Common myeloid progenitor, CD34-positive (primary cell): ENCODE measurements at regions of chr7 and their contacts with region 1.

Region 1: GRCh38 chr7:35801392-35802101 is 690 bp downstream of the SEPTIN7 start:
- DNase-seq: peak; percentile 88 to 97 (median 93)
- H3K4me3 ChIP-seq: peak overlapping the region; percentile 75 to 95 (median 91)
- H3K27ac ChIP-seq: peak overlapping the region; percentile 98 to 99
- H3K4me1 ChIP-seq: peaks cover 2 to 42% (median 23%) of the 10 kb centered on the region in 4 experiments
- H3K27me3 ChIP-seq: no peaks in the 10 kb centered on the region

Region 2: GRCh38 chr7:35694781-35695472 is 106.6 kb before region 1 on chr7 and contains the start of gene HERPUD2:
- CTCF ChIA-PET with region 1: interaction called, 3 read pairs
- POLR2A ChIA-PET with region 1: interaction called, 12 read pairs
- DNase-seq: peak; percentile 93 to 96 (median 95)
- H3K4me3 ChIP-seq: peak within 1 kb of the TSS; percentile 83 to 99 (median 87)
- H3K27ac ChIP-seq: peak within 1 kb of the TSS; percentile 92 to 95
- H3K4me1 ChIP-seq: peaks cover 19 to 53% (median 43%) of the 10 kb centered on the region in 4 experiments
- H3K27me3 ChIP-seq: no peaks in the 10 kb centered on the region

Region 3: DNA sequence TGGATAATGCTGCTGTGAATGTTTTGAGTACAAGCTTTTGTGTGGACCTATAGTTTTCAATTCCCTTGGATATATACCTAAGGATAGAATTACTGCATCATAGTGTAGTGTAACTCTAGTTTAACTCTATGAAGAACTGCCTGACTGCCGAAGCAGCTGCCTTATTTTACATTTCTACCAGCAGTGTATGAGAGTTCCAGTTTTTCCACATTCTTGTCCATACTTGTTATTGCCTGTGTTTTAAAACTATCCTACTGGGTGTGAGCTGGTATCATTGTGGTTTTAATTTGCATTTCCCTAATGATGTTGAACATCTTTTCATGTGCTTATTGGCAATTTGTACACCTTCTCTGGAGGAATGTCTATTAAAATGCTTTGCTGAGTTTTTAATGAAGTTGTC is 15.0 kb after region 1 on chr7:
- CTCF ChIA-PET with region 1: interaction called, 17 read pairs
- POLR2A ChIA-PET with region 1: interaction called, 3 read pairs
- DNase-seq: no peak
- H3K4me3 ChIP-seq: no peak overlapping the region
- H3K27ac ChIP-seq: no peak overlapping the region
- H3K4me1 ChIP-seq: peaks cover 0 to 2% (median 0%) of the 10 kb centered on the region in 4 experiments
- H3K27me3 ChIP-seq: no peaks in the 10 kb centered on the region